Spleen (tissue), 13 donors: ENCODE measurements at regions of chr16 and their contacts with region 1.

Region 1: DNA sequence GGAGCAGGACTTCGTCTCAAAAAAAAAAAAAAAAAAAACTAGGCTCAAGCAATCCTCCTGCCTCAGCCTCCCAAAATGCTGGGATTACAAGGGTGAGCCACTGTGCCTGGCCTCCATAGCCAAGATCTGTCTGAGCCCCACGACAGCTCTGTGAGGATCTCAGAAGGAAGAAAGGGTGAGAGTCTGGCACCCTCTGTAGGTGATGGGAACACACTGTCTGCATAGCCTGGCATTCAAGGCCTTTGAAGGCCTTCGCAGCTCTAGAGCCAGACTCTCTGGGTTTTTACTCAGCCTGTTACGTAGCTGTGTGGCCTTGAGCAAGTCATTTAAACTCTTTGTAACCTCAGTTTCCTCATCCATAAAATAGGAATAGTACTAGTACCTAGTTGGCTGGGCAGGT is 6.3 kb upstream of the XPO6 start:
- DNase-seq: no peak
- H3K4me3 ChIP-seq: no peak overlapping the region
- H3K27ac ChIP-seq: no peak overlapping the region
- H3K4me1 ChIP-seq: no peaks in the 10 kb centered on the region
- H3K27me3 ChIP-seq: no peaks in the 10 kb centered on the region
- CTCF ChIP-seq: peak; percentile 52 to 83 (median 69)
- POLR2A ChIP-seq: no peak

Region 2: DNA sequence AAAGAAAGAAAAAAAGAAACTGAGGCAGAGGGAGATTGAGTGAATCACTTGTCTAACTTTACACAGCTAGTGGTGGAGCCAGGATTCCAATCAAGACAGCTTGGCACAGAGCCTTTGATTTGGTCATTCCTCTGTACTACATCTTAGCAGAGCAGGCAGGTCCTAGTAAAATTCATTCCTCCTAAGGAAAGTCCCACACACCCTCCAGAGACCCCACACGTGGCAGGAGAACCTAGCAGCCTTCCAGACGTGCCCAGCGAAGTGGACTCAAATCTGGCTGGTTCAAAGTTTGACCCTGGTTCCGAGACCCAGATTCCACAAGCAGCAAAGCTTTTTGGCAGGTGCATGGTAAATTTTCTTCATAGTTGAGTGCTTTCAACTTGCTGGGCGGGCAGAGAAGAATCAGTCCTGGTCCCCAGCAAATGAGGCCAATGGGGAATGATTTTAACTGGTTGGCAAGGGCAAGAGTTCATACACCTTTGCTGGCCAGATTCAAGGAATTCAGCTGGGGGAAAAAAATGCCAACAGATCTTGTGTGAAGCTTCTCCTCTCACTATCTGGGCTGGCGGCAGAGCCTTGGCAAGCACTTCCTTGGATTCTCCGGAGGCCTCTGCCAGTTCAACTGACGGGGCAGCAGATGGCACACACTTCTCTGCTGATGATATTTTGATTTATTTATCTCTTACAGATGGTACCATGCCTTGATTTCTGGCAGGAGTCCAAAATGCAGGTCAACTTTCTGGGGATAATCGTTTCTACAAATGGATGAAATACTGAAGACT is 237.0 kb before region 1 on chr16:
- intact Hi-C with region 1: loop called (anchors 10 kb)
- DNase-seq: peak; percentile 38
- H3K4me3 ChIP-seq: no peak overlapping the region
- H3K27ac ChIP-seq: no peak overlapping the region
- H3K4me1 ChIP-seq: no peaks in the 10 kb centered on the region
- H3K27me3 ChIP-seq: peaks cover 0 to 15% (median 0%) of the 10 kb centered on the region in 7 donors
- CTCF ChIP-seq: no peak
- POLR2A ChIP-seq: no peak

Region 3: DNA sequence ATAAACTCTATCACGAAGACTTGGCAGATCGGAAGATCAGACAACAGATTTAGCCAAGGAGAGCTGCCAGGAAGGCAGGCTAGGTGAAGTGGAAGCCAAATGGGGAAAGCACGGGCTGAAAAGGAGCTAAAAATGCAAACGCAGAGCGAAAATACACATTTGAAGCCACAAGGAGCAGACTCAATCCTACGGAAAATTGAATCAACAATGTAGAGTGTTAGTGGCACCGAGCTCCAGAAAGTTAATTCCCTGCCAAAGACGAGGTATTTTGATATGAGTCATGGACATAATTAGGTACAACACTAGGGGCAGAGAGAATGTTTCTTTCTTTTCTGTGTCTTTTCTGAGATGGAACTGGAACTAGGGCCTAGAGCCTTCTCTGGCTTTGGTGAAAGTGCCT is 175.3 kb before region 1 on chr16:
- intact Hi-C with region 1: no loop called
- DNase-seq: no peak
- H3K4me3 ChIP-seq: no peak overlapping the region
- H3K27ac ChIP-seq: no peak overlapping the region
- H3K4me1 ChIP-seq: no peaks in the 10 kb centered on the region
- H3K27me3 ChIP-seq: peaks cover 0 to 28% (median 0%) of the 10 kb centered on the region in 7 donors
- CTCF ChIP-seq: no peak
- POLR2A ChIP-seq: no peak

Region 4: GRCh38 chr16:28136751-28137434 is 81.2 kb before region 1 on chr16:
- intact Hi-C with region 1: loop called (anchors 5 kb)
- DNase-seq: no peak
- H3K4me3 ChIP-seq: no peak overlapping the region
- H3K27ac ChIP-seq: peak overlapping the region; percentile 39 to 98 (median 78)
- H3K4me1 ChIP-seq: peaks cover 21 to 66% (median 48%) of the 10 kb centered on the region in 6 donors
- H3K27me3 ChIP-seq: no peaks in the 10 kb centered on the region
- CTCF ChIP-seq: peak in 10 of 11 experiments; percentile 19 to 54 (median 35)
- POLR2A ChIP-seq: no peak